ENCODE measurements at regions of chr2 and their contacts with region 1.

Region 1: DNA sequence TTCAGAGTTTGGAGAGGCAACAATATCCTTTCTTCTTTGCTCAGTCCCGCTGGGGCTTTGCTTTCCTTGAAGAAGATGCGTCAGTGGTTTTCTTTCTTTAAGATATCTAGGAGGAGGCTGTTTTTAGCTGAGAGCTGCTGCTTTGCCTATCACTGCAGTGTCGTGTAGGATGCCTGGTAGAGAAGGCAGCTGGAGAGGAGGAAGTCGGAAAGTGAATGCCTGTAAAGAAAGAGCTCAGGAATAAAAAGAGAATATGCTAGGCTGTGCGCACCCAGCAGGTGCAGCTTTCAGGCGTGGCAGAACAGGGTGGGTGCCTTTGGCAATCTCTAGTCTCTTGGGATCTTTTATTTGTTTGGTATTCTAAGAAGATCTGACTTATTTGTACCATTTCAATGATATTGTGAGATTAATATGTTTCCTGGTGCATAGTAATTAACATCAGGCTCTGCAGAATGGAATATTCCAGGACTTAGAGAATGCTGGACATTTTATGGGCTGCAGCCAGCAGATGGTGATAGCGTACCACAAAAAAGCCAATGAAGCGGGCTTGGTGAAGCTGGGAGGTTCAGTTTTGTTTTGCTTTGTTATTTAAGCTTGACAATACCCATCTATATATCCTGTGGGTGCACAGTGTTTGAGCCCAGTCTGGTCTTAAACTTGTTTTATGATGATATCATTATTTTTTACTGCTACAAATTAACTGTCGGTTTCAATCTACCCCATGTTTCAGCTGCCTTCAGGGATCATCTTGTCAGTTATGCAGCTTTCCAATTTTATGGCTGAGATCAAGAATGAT is 34.9 kb downstream of the CAVIN2 start:
- DNase-seq: peak; percentile 86
- H3K4me3 ChIP-seq: no peak overlapping the region
- H3K27ac ChIP-seq: no peak overlapping the region
- H3K4me1 ChIP-seq: peaks cover 2% of the 10 kb centered on the region
- H3K27me3 ChIP-seq: no peaks in the 10 kb centered on the region
- CTCF ChIP-seq: peak; percentile 67 to 68
- POLR2A ChIP-seq: no peak

Region 2: DNA sequence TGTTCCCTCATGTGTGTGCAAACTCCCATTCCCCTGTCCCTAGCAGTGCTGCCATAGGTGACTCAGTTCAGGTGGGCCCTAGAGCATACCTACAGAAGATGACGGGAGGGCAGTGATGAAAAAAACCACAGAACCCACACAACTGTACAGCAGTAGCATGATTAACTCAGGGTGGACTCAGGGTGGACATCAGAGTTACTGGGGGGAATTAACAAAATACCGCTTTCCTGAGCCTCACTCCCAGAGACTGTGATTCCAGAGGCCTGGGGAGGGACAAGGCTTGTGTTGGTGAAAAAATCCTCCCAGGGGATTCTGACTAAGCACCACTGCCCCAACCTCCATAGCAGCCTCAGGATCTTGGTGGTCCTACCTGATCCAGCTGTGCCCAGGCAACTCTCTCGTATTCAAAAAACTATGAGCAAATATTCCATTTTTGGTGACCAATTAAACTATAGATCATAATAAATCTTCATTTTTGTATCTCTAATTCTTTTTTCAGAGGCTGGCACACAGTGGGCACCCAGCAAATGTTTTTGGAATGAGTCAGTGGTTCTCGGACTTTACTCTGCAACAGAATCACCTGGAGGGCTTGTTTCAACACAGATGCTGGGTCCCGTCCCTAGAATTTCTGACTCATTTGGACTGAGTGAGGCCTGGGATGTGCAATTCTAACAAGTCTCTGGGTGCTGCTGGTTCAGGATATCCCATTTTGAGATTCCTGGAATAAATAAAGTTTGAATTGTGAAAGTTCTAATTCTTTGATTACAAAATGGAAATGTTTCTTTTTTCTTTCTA is 218.2 kb before region 1 on chr2:
- CTCF ChIA-PET with region 1: no interaction called
- POLR2A ChIA-PET with region 1: no interaction called
- dilution Hi-C with region 1: no loop called
- intact Hi-C with region 1: no loop called
- DNase-seq: no peak
- H3K4me3 ChIP-seq: no peak overlapping the region
- H3K27ac ChIP-seq: no peak overlapping the region
- H3K4me1 ChIP-seq: no peaks in the 10 kb centered on the region
- H3K27me3 ChIP-seq: peaks cover 0 to 2% of the 10 kb centered on the region in 2 experiments
- CTCF ChIP-seq: no peak
- POLR2A ChIP-seq: no peak

Region 3: DNA sequence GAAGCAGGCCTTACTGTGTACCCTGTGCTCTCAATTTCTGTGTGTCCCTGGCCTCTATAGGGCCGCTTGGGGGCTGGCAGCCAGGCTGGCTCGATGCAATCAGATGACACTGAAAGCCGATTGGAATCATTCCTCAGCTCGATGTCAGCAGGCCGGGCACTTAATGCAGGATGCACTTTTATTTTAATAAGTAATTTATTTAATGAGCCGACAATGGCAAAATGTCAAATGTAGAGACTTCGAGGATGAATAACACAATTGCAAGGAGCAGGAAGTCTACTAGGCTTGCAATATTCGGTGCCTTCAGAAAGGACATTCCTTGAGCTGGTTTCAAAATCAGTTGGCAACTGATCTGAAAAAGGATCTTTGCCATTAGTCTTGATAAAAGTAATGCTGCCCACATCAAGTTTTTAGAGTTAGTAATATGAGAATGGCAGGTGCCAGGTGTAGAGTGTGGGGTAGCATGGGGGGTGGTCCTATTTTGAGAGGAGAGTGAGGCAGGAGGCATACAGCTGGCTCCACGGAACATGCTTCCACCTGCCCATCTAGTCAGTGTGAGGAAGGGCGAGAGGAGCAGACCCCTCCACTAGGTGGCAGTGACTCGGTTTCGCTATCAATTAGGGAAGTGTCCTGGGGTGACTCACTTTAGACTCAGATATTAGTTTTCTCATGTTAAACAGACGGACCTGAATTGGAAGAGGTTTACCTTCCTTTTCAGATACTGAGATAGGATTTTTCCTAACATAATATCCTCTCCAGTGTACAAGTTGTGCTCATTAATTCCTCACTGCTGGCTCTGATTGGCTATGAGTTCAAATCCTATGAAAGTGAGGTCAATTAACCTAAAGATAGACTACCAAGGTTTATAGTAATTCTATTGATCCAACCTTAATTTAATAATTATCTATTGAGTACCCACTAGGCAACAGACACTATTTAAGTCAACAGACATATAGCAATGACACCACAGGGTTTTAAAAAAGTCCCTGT is 53.2 kb before region 1 on chr2:
- CTCF ChIA-PET with region 1: interaction called, 10 read pairs
- POLR2A ChIA-PET with region 1: no interaction called
- dilution Hi-C with region 1: no loop called
- intact Hi-C with region 1: loop called (anchors 2 kb)
- DNase-seq: peak; percentile 66
- H3K4me3 ChIP-seq: no peak overlapping the region
- H3K27ac ChIP-seq: no peak overlapping the region
- H3K4me1 ChIP-seq: no peaks in the 10 kb centered on the region
- H3K27me3 ChIP-seq: peaks cover 10 to 14% of the 10 kb centered on the region in 2 experiments
- CTCF ChIP-seq: peak; percentile 79 to 81
- POLR2A ChIP-seq: no peak

Region 4: DNA sequence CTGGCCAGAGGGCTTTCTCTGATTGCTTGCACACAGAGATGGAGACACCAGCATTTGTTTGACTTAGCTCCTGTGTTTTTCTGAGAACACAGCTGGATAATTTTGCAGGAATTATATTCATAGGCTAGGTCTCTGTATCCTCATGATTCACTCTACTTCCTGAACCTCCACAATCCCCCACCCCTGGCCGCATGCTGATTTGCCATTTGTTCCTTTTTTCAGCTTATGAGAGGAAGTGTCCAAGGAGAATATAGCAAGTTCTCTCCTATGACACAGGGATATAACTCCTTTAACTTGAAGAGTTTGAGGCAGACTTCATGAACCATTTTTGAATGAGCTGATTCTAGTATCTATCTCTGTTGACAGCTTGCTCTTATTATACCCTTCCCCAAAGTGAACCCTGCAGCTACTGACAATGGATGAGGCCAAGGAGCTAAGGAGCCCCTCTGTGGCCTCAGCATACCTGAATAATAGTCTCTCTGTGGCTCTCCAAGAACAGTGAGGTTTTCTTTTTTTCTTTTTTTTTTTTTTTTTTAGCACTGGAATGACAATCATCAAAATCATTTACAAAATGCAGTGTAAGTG is 19.5 kb after region 1 on chr2:
- CTCF ChIA-PET with region 1: interaction called, 14 read pairs
- POLR2A ChIA-PET with region 1: interaction called, 4 read pairs
- dilution Hi-C with region 1: no loop called
- intact Hi-C with region 1: no loop called
- DNase-seq: peak; percentile 85
- H3K4me3 ChIP-seq: no peak overlapping the region
- H3K27ac ChIP-seq: peak overlapping the region; percentile 8
- H3K4me1 ChIP-seq: peaks cover 20% of the 10 kb centered on the region
- H3K27me3 ChIP-seq: no peaks in the 10 kb centered on the region
- CTCF ChIP-seq: no peak
- POLR2A ChIP-seq: peak; percentile 51

Region 5: DNA sequence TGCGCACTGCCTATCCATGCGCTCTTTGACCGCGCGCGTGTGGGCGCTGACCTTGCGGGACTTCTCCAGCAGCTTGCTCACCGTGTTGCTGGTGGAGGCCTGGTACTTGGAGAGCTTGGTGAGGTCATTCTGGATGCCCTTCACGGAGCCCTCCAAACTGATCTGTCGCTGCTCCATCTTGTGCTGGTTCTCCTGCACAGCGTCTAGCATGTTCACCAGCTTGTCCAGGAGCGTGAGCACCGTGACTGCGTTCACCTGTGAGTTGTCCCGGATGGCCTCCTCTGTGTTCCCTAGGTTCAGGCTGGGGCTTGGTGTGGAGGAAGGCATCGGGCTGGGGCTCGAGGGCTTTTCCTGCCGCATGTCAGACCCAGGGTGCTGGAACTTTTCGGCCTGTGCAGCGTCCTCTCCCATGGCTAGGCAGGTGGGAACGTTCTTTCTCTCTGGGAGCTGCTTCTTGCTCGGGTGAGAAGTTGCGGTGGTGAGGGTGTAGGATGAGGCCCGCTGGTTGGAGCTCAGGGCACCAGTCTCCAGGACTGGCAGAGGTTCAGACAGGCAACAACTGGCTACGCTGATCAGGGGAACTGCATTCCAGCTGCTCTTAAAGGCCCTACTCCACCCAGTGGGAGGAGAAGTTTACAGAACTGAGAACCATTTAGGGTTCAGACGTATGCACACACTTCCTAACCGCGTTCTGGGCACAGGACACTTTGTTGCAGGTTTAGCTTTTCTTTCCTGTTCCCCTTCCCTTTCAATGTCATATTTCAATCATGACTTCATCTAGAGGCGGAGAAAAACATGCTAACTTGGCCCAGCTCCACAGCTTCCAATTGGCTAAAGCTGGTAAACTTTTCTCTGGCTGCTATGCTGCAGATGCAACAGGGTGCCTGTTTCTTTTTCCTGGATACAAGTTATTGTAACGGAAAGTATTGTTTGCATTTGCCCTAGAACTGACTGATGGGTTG is 34.8 kb after region 1 on chr2 and contains the start of gene CAVIN2:
- CTCF ChIA-PET with region 1: interaction called, 18 read pairs
- POLR2A ChIA-PET with region 1: no interaction called
- dilution Hi-C with region 1: no loop called
- intact Hi-C with region 1: loop called (anchors 1 kb)
- DNase-seq: peak; percentile 100
- H3K4me3 ChIP-seq: peak within 1 kb of the TSS; percentile 82 to 99 (median 95)
- H3K27ac ChIP-seq: peak within 1 kb of the TSS; percentile 76
- H3K4me1 ChIP-seq: peaks cover 21% of the 10 kb centered on the region
- H3K27me3 ChIP-seq: no peaks in the 10 kb centered on the region
- CTCF ChIP-seq: peak in 1 of 2 donors; percentile 17
- POLR2A ChIP-seq: peak; percentile 98
- total RNA-seq, gene CAVIN2: 171 and 202 TPM in 2 replicates

Region 6: DNA sequence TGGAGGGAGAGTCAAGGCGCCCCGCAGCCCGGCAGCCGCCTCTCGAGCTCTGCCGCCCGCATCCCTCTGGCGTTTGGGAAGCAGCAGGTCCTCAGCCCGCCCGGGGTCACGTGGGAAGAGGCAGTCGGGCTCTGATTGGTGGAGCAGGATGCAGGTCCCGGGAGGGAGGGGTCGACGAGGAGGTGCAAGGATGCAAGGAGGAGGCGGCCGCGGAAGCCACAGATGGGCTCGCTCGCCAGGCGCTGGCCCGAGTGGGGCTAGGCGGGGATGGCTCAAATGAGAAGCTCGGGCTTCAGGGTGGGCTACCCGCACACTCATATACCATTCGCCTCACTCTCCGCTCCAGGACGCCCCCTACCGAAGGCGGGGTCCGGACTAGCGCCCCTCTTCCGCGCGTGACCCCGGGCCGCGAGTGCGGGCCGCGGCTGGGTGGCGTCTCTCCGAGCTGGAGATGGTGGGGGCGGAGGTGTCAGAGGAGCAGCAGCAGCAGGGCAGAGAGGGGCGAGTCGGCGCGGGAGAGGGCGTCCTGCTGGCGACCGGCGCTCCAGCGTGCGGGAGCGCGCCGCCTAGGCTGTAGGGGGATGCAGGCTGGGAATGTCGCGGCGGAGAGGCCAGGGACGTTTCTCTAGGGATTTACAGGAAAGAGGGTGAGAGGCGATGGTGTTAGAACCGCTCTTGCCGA is 383.0 kb after region 1 on chr2 and contains the start of gene TMEFF2:
- CTCF ChIA-PET with region 1: interaction called, 34 read pairs
- POLR2A ChIA-PET with region 1: no interaction called
- dilution Hi-C with region 1: no loop called
- intact Hi-C with region 1: loop called (anchors 1 kb)
- DNase-seq: peak; percentile 61
- H3K4me3 ChIP-seq: peak within 1 kb of the TSS; percentile 38 to 75 (median 43)
- H3K27ac ChIP-seq: no peak within 1 kb of the TSS
- H3K4me1 ChIP-seq: peaks cover 27% of the 10 kb centered on the region
- H3K27me3 ChIP-seq: peaks cover 48 to 89% of the 10 kb centered on the region in 2 experiments
- CTCF ChIP-seq: peak; percentile 24 to 32
- POLR2A ChIP-seq: no peak
- total RNA-seq, gene TMEFF2: 0.12 and 0.20 TPM in 2 replicates

Region 7: GRCh38 chr2:193584522-193584938 is 1772.5 kb after region 1 on chr2:
- CTCF ChIA-PET with region 1: interaction called, 26 read pairs
- POLR2A ChIA-PET with region 1: no interaction called
- dilution Hi-C with region 1: no loop called
- intact Hi-C with region 1: loop called (anchors 2 kb)
- DNase-seq: peak; percentile 16
- H3K4me3 ChIP-seq: no peak overlapping the region
- H3K27ac ChIP-seq: no peak overlapping the region
- H3K4me1 ChIP-seq: no peaks in the 10 kb centered on the region
- H3K27me3 ChIP-seq: no peaks in the 10 kb centered on the region
- CTCF ChIP-seq: peak; percentile 18 to 24
- POLR2A ChIP-seq: no peak